ENCODE measurements at regions of chr10 and their contacts with region 1.

Region 1: GRCh38 chr10:26326851-26327250 is 110.3 kb downstream of the GAD2 start:
- DNase-seq: no peak
- H3K4me3 ChIP-seq: no peak overlapping the region
- CTCF ChIP-seq: no peak
- POLR2A ChIP-seq: no peak

Region 2: GRCh38 chr10:26303366-26303765 is 23.5 kb before region 1 on chr10:
- intact Hi-C with region 1: loop called (anchors 1 kb)
- DNase-seq: no peak
- H3K4me3 ChIP-seq: no peak overlapping the region
- CTCF ChIP-seq: no peak
- POLR2A ChIP-seq: no peak

Region 3: GRCh38 chr10:26386781-26387180 is 59.9 kb after region 1 on chr10:
- intact Hi-C with region 1: no loop called
- DNase-seq: no peak
- H3K4me3 ChIP-seq: no peak overlapping the region
- CTCF ChIP-seq: no peak
- POLR2A ChIP-seq: no peak

Measured in lower leg skin (tissue), 4 donors.